OCI-LY7 (cell line): ENCODE measurements at regions of chr21 and their contacts with region 1.

Region 1: DNA sequence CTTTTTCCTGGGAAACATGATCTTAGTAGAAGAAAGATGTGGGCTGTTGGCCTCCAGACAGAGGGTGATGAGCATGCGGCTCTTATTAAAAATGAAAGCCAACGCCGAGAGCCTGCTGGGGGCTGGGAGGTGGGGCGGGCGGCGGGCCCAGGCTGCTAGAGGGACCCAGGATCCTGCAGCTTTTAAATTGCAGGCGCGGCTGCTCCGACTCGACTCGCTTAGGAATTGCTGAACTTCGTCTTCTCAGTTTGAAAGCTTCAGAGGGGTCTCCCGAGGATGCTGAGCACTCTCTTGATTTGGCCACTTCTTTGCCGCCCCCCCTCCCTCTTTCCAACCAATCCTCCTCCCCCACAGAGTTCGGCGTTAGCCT is 1.2 kb downstream of the AGPAT3 start:
- DNase-seq: peak; percentile 47
- H3K4me3 ChIP-seq: peak overlapping the region; percentile 72
- H3K27ac ChIP-seq: peak overlapping the region; percentile 15
- H3K4me1 ChIP-seq: peaks cover 50% of the 10 kb centered on the region
- CTCF ChIP-seq: no peak

Region 2: DNA sequence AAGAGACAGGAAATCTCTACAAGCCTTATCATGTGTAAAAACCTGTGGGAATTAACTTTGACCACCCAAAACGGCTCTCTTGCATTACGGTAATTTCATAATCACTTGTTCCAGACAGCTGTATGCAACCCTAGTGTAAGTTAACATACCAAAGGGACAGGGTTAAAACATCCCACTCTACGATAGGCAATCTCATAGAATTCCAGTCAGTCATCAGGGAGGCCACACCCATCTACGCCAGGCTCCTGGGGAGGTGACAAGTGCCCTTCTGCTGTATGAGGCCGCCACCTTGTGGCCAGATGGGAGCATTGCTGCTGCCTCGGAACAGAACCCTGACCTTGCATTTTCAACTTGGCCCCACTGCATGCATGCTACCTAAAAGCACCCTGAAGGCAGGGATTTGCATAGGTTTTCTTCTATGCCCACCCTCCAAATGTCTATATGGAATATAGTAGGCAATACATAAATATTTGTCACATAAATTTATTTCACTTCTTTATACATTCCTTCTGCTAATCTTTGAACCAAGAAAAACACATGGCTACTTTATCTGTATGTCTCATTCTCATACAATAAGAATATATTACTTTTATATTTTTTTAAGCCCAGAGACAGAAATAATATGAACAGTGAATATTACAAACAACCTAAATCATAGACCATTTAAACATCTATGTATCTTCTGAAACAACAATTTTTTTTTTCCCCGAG is 219.5 kb before region 1 on chr21:
- CTCF ChIA-PET with region 1: no interaction called
- POLR2A ChIA-PET with region 1: no interaction called
- intact Hi-C with region 1: no loop called
- DNase-seq: peak; percentile 86
- H3K4me3 ChIP-seq: no peak overlapping the region
- H3K27ac ChIP-seq: no peak overlapping the region
- H3K4me1 ChIP-seq: peaks cover 14% of the 10 kb centered on the region
- CTCF ChIP-seq: peak; percentile 100

Region 3: GRCh38 chr21:43938751-43939442 is 72.7 kb after region 1 on chr21:
- CTCF ChIA-PET with region 1: no interaction called
- POLR2A ChIA-PET with region 1: no interaction called
- intact Hi-C with region 1: loop called (anchors 5 kb)
- DNase-seq: peak; percentile 92
- H3K4me3 ChIP-seq: peak overlapping the region; percentile 66
- H3K27ac ChIP-seq: no peak overlapping the region
- H3K4me1 ChIP-seq: peaks cover 10% of the 10 kb centered on the region
- CTCF ChIP-seq: peak; percentile 99